Sciatic nerve (tissue), 2 donors: ENCODE measurements at regions of chr13 and their contacts with region 1.

Region 1: GRCh38 chr13:50650592-50651301 is 192.7 kb downstream of the DLEU7 start:
- DNase-seq: no peak
- ATAC-seq: peak; percentile 50

Region 2: GRCh38 chr13:48923376-48923775 is 1727.4 kb before region 1 on chr13:
- intact Hi-C with region 1: no loop called
- DNase-seq: no peak
- ATAC-seq: no peak

Region 3: GRCh38 chr13:50319635-50320255 is 331.0 kb before region 1 on chr13:
- intact Hi-C with region 1: loop called (anchors 5 kb)
- DNase-seq: no peak
- ATAC-seq: no peak